ENCODE measurements at regions of chr1 and their contacts with region 1.

Region 1: DNA sequence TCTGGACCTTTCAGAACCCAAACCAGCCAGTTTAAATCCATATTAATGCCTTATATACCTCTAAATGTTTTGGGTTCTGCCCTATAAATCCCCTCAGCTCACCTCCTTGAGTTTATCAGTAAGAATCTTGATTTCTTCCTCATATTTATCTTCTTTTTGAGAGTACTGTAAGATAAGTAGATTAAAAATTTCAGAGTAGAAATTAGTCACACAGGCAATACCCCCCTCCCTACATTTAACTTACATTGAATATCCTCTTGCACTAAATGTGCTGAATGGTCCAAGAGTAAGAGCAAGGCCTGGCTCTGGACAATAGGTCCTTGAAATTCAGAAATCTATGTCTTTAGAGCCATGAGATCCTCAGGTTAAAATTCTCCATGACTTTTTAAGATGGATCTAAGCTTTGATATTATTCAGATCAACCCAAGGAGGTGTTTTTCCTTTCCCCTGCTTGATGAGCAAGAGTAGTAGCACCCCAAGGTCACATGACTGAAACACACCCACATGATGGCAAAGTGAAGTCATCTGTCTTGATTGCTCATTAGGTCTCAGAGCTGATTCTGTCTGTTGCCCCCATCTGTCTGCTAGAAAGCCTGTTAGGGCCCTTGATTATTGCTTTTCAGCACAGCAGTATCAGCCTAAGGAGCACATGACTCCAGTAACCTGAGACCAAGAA is 15.8 kb upstream of the NUP210L start:
- DNase-seq: no peak
- H3K4me3 ChIP-seq: no peak overlapping the region
- H3K27ac ChIP-seq: no peak overlapping the region
- H3K4me1 ChIP-seq: peaks cover 0 to under 1% of the 10 kb centered on the region in 2 donors
- H3K27me3 ChIP-seq: no peaks in the 10 kb centered on the region
- CTCF ChIP-seq: no peak
- POLR2A ChIP-seq: no peak

Region 2: GRCh38 chr1:154129391-154129970 is 41.2 kb before region 1 on chr1:
- intact Hi-C with region 1: loop called (anchors 2 kb)
- DNase-seq: no peak
- H3K4me3 ChIP-seq: no peak overlapping the region
- H3K27ac ChIP-seq: no peak overlapping the region
- H3K4me1 ChIP-seq: no peaks in the 10 kb centered on the region
- H3K27me3 ChIP-seq: no peaks in the 10 kb centered on the region
- CTCF ChIP-seq: no peak
- POLR2A ChIP-seq: no peak

Region 3: DNA sequence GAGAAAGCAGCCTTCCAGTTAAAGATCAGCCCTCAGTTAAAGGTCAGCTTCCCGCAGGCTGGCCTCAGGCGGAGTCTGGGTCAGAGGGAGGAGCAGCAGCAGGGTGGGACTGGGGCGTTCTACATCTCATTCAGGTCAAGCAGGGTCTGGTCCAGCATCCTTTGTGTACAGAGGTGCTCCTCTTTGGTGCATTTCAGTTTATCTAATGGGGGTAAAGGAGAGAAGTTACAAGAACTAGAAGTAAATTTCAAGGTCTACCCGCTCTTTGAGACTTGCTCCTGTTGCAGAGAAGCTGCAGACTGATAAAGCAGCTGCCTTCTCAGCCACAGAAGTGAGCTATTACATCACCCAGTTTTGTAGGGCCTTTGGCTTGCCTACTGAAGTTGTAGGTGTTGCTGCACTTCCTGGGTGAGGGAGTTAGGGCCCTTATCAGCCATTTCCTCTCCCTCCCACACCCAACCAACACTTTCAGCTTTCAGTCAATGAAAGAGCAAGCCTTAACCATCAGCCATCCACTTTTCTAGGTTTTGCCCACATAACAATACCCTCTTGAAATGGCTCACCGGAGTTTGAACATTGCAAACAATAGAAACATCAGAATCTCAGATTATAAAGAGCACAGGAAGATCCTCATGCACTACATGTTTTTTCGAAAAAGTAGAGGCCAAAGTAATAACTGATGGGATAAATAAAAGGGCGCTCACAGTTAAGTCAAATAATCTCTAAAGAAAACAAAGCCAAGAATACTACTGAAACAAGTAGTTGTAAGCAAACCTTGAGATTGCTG is 13.0 kb before region 1 on chr1:
- intact Hi-C with region 1: no loop called
- DNase-seq: no peak
- H3K4me3 ChIP-seq: no peak overlapping the region
- H3K27ac ChIP-seq: peak overlapping the region in 1 of 2 donors; percentile 30
- H3K4me1 ChIP-seq: no peaks in the 10 kb centered on the region
- H3K27me3 ChIP-seq: no peaks in the 10 kb centered on the region
- CTCF ChIP-seq: no peak
- POLR2A ChIP-seq: no peak